A549 (cell line): ENCODE measurements at regions of chr10 and their contacts with region 1.

Region 1: GRCh38 chr10:122565728-122566206 is 5.2 kb downstream of the DMBT1 start:
- DNase-seq: peak; percentile 61 to 85
- ATAC-seq: peak; percentile 65 to 74
- H3K4me3 ChIP-seq: no peak overlapping the region
- H3K27ac ChIP-seq: peak overlapping the region in 1 of 2 experiments; percentile 49; a peak in 2 of 6 replicates
- H3K4me1 ChIP-seq: peaks cover 9% of the 10 kb centered on the region; the same call in 1 of the 3 replicates
- CTCF ChIP-seq: peak; percentile 92
- EP300 ChIP-seq: no peak
- POLR2A ChIP-seq: no peak
- RAD21 ChIP-seq: peak; percentile 94 to 95

Region 2: GRCh38 chr10:122307669-122308486 is 257.9 kb before region 1 on chr10:
- CTCF ChIA-PET with region 1: interaction called, 35 read pairs
- POLR2A ChIA-PET with region 1: no interaction called
- DNase-seq: peak; percentile 91 to 93
- ATAC-seq: peak; percentile 68 to 73
- H3K4me3 ChIP-seq: no peak overlapping the region
- H3K27ac ChIP-seq: peak overlapping the region; percentile 88 to 94
- H3K4me1 ChIP-seq: peaks cover 53% of the 10 kb centered on the region
- CTCF ChIP-seq: no peak
- EP300 ChIP-seq: peak; percentile 29 to 58; a peak in 3 of 5 replicates
- POLR2A ChIP-seq: no peak
- RAD21 ChIP-seq: peak in 1 of 2 experiments; percentile 27; a peak in 1 of 5 replicates

Region 3: DNA sequence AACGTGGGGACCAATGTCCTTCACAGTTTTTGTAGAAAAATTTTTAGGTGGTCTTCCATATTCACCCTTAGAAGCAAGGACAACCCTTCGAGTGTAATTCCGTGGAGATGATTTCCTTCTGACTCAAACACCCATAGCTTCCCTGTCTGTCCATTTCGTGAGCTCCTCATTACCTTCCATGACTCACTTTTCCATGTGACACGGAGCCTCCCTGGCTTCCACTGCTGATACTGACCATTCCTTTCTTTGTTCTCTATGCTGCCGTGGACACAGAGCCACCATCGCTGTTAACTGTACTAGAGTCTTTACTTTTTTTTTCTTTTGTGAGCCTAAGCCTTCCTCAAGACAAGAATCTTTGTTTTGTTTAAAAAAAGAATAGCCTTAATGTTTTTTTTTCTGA is 123.8 kb before region 1 on chr10:
- CTCF ChIA-PET with region 1: interaction called, 12 read pairs
- POLR2A ChIA-PET with region 1: no interaction called
- DNase-seq: peak; percentile 58 to 78
- ATAC-seq: peak; percentile 92 to 93
- H3K4me3 ChIP-seq: no peak overlapping the region
- H3K27ac ChIP-seq: peak overlapping the region; percentile 30 to 52; a peak in 3 of 6 replicates
- H3K4me1 ChIP-seq: peaks cover 16% of the 10 kb centered on the region; the same call in 2 of the 3 replicates
- CTCF ChIP-seq: no peak
- EP300 ChIP-seq: no peak
- POLR2A ChIP-seq: no peak
- RAD21 ChIP-seq: no peak

Region 4: DNA sequence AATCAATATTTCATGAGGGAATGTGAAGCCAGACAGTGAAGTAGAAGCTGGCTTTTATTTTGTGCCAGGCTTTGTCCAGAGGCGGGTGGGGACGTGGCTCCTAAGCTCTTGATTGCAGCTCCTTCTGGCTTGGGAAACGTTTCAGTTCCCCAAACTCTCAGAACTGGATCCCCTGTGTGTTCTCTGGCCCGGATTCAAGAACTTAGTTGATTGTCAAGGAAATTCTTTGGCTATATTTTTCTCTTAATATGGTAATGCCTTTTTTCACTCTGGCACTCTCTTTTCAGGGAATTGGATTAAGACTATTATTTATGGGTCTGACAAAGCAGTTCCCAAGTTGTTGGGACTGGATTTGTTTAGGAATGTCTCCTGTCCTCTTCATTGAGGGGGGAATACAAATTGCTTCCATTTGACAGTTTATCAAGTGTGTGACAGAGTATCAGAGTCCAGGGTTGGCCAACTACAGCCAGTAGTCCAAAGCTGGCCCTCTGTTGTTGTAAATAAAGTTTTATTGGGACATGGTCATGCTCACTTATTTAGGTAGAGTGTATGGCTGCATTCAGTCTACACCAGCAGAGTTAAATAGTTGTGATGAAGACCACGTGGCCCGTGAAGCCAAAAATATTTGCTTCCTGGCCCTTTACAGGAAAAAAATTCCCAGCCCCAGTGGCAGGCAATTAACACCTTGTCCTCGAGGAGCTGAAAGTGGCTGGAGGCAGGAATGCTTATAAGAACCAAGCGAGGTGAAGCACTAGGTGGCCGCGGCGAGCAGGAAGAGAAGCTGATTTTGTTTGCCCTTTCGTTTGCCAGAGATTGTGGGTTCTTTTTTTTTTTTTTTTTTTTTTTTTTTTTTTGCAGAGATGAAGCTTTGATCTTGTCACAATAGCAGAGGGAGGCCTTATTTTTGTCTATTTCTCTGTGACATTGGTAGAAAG is 70.1 kb before region 1 on chr10:
- CTCF ChIA-PET with region 1: interaction called, 16 read pairs
- POLR2A ChIA-PET with region 1: no interaction called
- DNase-seq: no peak
- ATAC-seq: no peak
- H3K4me3 ChIP-seq: no peak overlapping the region
- H3K27ac ChIP-seq: peak overlapping the region in 1 of 2 experiments; percentile 5; a peak in 1 of 6 replicates
- H3K4me1 ChIP-seq: peaks cover 7% of the 10 kb centered on the region; the same call in 1 of the 3 replicates
- CTCF ChIP-seq: no peak
- EP300 ChIP-seq: no peak
- POLR2A ChIP-seq: no peak
- RAD21 ChIP-seq: no peak

Region 5: DNA sequence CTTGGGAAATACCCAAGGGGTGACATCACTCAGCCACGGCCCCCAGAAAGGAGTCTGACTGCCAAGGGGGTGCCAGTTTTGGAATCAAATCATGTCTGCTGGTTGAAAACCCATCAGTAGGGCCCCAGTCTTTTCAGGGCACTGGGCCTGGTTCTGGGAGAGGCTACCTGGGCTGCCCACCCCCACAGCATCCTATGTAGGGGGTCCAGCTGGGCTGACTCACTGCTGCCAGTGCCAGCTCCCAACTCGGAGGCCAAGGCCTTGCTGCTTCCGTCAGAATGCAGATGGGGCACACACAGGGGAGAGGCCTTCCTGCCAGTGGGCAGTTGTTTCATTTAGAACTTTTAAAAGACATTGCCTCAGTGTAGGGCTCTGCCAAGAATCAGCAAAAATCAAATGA is 44.8 kb before region 1 on chr10:
- CTCF ChIA-PET with region 1: interaction called, 15 read pairs
- POLR2A ChIA-PET with region 1: no interaction called
- DNase-seq: no peak
- ATAC-seq: no peak
- H3K4me3 ChIP-seq: no peak overlapping the region
- H3K27ac ChIP-seq: no peak overlapping the region
- H3K4me1 ChIP-seq: no peaks in the 10 kb centered on the region
- CTCF ChIP-seq: no peak
- EP300 ChIP-seq: no peak
- POLR2A ChIP-seq: no peak
- RAD21 ChIP-seq: no peak

Region 6: GRCh38 chr10:122587098-122587760 is 21.5 kb after region 1 on chr10:
- CTCF ChIA-PET with region 1: interaction called, 15 read pairs
- POLR2A ChIA-PET with region 1: no interaction called
- DNase-seq: no peak
- ATAC-seq: no peak
- H3K4me3 ChIP-seq: no peak overlapping the region
- H3K27ac ChIP-seq: no peak overlapping the region
- H3K4me1 ChIP-seq: no peaks in the 10 kb centered on the region
- CTCF ChIP-seq: no peak
- EP300 ChIP-seq: no peak
- POLR2A ChIP-seq: no peak
- RAD21 ChIP-seq: no peak

Region 7: GRCh38 chr10:122802282-122802681 is 236.5 kb after region 1 on chr10:
- CTCF ChIA-PET with region 1: no interaction called
- POLR2A ChIA-PET with region 1: no interaction called
- DNase-seq: no peak
- ATAC-seq: no peak; a peak in 1 of 6 replicates
- H3K4me3 ChIP-seq: no peak overlapping the region
- H3K27ac ChIP-seq: no peak overlapping the region
- H3K4me1 ChIP-seq: no peaks in the 10 kb centered on the region
- CTCF ChIP-seq: no peak
- EP300 ChIP-seq: no peak
- POLR2A ChIP-seq: peak; percentile 13; the same call in 1 of the 2 replicates
- RAD21 ChIP-seq: no peak